Mammary epithelial cell (primary cell): ENCODE measurements at regions of chr10 and their contacts with region 1.

Region 1: DNA sequence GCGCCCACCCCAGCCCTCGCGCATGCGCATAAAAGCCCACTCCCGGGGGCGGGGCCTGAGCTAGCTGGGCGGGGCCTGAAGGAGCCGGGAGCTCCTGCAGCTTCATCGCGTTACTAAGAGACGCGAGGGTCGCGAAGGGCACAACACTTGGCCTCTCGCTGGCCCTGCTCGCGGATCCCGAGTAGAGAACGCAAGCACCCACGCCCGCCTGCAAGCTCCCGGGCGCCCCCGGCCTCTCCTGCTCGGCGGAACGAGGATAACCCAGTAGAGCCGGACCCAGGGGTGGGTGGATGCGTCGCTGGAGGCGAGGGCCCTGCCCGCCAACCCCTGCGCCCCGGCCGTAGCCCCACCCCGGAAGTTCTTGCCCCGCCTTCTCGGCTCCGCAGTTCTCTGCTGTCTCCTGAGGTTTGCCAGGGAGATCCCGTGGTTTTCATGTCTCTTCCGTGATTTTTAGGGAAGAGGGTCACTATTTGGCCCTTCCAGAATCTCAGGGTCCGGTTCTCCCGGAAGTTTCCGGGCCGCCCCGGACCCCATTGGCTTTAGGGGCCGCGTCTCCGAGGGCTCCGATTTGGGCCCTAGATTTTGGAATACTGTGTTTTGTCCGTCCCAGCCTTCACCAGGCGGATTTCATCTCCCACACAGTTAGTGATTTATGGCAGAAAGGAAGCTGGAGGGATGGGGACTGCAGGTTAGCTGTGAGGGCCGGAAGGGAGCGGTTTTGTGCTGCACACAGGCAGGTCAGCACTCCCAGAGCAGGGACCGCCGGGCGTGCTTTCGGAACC is at the start of gene MEIG1:
- DNase-seq: peak; percentile 91
- H3K4me3 ChIP-seq: peak within 1 kb of the TSS; percentile 70 to 87 (median 73)
- H3K27ac ChIP-seq: peak within 1 kb of the TSS; percentile 89
- H3K4me1 ChIP-seq: peaks cover 12% of the 10 kb centered on the region
- H3K27me3 ChIP-seq: no peaks in the 10 kb centered on the region
- CTCF ChIP-seq: no peak
- total RNA-seq, gene MEIG1: 0.68 TPM in 1 of 2 donors, not detected in the other

Region 2: GRCh38 chr10:14878266-14879054 is 81.0 kb before region 1 on chr10 and contains the start of gene SUV39H2:
- CTCF ChIA-PET with region 1: no interaction called
- dilution Hi-C with region 1: no loop called
- in situ Hi-C with region 1: no loop called
- intact Hi-C with region 1: loop called (anchors 2 kb)
- DNase-seq: peak; percentile 93
- H3K4me3 ChIP-seq: peak within 1 kb of the TSS; percentile 77 to 96 (median 93)
- H3K27ac ChIP-seq: peak within 1 kb of the TSS; percentile 89
- H3K4me1 ChIP-seq: peaks cover 16% of the 10 kb centered on the region
- H3K27me3 ChIP-seq: no peaks in the 10 kb centered on the region
- CTCF ChIP-seq: peak in 1 of 2 donors; percentile 2
- total RNA-seq, gene SUV39H2: 8.5 to 17.2 TPM

Region 3: DNA sequence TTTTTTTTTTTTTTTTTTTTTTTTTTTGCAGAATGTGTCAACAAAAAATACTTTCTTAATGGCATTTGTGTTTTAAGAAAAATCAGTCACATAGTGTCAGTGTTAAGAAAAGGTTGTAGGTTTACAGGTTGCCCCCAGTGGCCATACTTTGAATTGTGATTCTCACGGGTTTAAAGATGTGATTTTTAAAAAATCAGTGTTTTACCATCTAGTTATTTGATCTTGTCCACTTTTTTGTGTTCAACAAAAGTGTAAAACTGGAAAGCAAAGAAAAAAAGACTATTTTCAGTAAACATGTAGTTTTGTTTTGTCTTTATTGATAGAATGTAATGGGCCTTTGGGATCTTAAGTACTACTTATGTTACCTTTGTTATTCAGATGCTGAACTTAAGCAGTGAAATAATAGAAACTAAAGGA is 55.1 kb before region 1 on chr10:
- CTCF ChIA-PET with region 1: no interaction called
- dilution Hi-C with region 1: loop called (anchors 10 kb)
- in situ Hi-C with region 1: no loop called
- intact Hi-C with region 1: no loop called
- DNase-seq: no peak
- H3K4me3 ChIP-seq: no peak overlapping the region
- H3K27ac ChIP-seq: no peak overlapping the region
- H3K4me1 ChIP-seq: no peaks in the 10 kb centered on the region
- H3K27me3 ChIP-seq: no peaks in the 10 kb centered on the region
- CTCF ChIP-seq: peak; percentile 59 to 62

Region 4: DNA sequence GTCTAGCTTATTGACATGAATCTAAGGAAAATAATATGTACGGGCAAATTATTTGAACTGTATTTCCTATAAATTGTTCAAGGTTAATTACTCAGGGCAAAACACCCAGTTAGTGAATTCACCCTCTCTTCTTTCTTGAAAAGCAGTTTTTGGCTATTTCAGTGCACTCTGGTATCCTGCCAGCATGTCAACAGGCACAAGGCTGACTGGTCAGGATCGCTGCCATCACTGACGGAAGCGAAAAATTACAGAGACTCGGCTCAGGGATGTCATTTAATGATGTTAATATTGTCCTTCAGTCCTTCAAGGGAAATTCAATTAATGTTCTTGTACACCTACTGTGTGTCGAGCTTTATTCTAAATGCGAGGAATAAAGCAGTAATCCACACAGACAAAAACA is 56.0 kb after region 1 on chr10:
- CTCF ChIA-PET with region 1: no interaction called
- dilution Hi-C with region 1: no loop called
- in situ Hi-C with region 1: no loop called
- intact Hi-C with region 1: loop called (anchors 2 kb)
- DNase-seq: no peak
- H3K4me3 ChIP-seq: no peak overlapping the region
- H3K27ac ChIP-seq: no peak overlapping the region
- H3K4me1 ChIP-seq: peaks cover 17% of the 10 kb centered on the region
- H3K27me3 ChIP-seq: no peaks in the 10 kb centered on the region
- CTCF ChIP-seq: no peak

Region 5: DNA sequence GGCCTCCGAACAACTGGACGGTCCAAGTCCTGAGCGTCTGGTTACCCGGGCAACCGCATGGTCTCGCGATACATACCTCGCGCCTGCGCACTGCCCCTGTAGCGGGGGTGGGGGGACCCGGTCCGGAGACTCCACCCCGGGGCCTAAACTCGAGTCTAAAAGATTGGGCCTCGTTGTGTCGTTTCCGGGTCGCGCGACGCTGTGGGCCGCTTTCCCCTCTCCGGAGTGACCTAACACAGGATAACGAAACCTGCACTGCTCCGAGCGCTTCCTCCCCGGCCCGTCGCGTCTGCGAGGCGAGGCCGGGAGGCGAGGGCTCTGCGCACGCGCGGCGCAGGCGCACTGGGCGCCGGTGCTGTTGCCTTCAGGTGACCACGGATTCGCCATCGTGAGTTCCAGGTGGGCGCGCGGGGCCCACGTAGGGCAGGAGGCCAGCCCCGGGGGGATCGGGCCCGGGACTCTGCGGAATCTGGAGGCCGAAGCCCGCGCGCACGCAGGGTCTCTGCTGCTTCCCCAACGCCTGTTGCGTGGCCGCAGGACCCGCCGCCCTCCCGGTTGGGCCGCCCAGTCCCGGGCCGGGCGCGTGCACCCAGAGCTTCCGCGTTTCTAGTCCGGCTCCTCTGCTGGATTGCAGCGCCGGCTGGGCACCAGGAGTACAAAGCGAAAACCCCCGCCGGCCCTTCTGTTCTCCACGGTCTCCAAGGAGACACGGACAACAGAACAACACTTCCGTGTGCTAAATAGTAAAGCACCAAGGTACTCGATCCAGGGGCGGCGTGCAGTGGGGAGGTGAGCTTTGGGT is 137.7 kb after region 1 on chr10 and contains the start of gene RPP38:
- CTCF ChIA-PET with region 1: no interaction called
- dilution Hi-C with region 1: no loop called
- in situ Hi-C with region 1: no loop called
- intact Hi-C with region 1: loop called (anchors 1 kb)
- DNase-seq: peak; percentile 93
- H3K4me3 ChIP-seq: peak within 1 kb of the TSS; percentile 50 to 98 (median 81)
- H3K27ac ChIP-seq: peak within 1 kb of the TSS; percentile 92
- H3K4me1 ChIP-seq: peaks cover 16% of the 10 kb centered on the region
- H3K27me3 ChIP-seq: no peaks in the 10 kb centered on the region
- CTCF ChIP-seq: no peak
- total RNA-seq, gene RPP38: 13.0 to 21.7 TPM